Aorta (tissue), 5 donors: ENCODE measurements at regions of chr3 and their contacts with region 1.

Region 1: DNA sequence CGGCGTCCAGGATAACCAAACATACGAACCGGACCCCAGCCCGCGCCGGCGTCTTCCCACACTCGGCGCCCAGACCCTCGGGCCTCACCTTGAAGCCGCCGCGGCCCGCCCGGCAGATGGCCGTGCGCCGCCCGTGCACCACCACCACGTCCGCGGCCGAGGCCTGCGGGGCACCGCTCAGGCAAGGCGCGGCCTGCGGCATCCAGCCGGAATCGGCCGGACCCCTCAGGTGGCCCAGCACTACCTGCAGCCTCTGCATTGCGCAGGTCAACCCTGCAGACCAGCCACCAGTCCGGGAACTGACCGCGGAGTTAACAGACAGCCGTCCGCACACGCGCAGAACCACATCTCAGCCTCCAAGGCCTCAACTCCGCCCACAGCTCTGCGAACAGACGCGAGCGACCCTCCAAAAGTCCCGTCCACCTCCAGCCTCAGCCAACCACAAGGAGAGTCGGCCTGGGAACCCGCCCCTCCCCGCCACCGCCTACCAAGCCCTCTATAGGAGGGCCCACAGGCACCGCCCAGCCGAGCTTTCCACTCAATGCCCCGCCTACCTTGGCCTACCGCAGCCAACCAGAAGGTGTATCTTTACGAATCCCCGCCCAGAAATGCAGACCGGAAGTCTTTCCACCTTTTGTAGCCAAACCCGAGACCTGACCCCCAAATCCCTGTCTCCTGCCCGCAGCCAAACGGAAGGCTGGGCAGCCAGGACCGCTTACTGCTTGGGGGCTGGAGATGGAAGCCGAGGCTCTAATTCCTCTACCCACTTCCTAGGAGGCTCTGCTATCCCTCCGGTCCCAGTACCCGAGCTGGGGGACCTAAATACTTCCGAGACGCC is at the start of gene ACAA1:
- DNase-seq: peak; percentile 100
- ATAC-seq: peak; percentile 98
- H3K4me3 ChIP-seq: peak within 1 kb of the TSS; percentile 54 to 58
- H3K27ac ChIP-seq: peak within 1 kb of the TSS; percentile 29 to 98
- H3K4me1 ChIP-seq: no peaks in the 10 kb centered on the region
- H3K27me3 ChIP-seq: no peaks in the 10 kb centered on the region
- total RNA-seq, gene ACAA1: 39.3 to 54.8 TPM

Region 2: DNA sequence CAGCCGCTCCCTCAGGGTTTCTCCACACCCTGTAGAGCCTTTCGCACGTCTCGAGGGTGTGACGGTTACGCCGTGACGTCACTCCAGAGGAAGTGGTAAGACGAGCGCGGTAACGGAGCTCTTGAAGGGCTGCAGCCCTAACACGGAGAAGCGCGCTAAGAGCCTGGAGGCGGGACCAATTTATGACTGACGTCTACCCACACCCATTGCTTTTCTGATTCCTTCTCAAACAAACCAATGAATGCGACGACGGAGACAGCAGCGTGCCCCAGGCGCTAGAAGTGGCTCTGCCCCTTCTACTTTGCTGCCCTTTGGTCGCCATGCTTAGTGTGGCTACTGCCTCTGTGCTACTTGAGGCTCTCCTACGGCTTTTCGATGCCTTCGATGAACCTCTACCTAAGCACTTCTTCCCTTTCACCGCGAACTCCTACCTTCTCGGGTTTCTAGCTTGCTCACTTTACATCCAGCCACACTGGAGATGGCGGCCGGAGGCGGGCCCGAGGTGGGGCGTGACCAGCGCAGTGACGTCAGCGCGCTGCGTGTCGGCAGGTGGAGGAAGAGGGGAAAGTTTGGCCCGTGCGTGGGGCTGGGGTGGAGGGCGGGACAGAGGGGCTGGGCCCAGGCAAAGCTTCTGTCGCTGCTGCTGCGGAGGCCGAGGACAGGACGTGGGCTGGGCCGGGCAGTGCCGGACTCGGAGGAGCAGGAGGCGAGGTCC is 28.1 kb after region 1 on chr3 and contains the start of gene OXSR1:
- intact Hi-C with region 1: loop called (anchors 1 to 2 kb)
- DNase-seq: peak; percentile 99
- ATAC-seq: peak; percentile 98
- H3K4me3 ChIP-seq: peak within 1 kb of the TSS; percentile 75 to 79
- H3K27ac ChIP-seq: peak within 1 kb of the TSS; percentile 4 to 54
- H3K4me1 ChIP-seq: peaks cover 2% of the 10 kb centered on the region in 2 donors
- H3K27me3 ChIP-seq: no peaks in the 10 kb centered on the region
- total RNA-seq, gene OXSR1: 38.9 to 42.0 TPM

Region 3: DNA sequence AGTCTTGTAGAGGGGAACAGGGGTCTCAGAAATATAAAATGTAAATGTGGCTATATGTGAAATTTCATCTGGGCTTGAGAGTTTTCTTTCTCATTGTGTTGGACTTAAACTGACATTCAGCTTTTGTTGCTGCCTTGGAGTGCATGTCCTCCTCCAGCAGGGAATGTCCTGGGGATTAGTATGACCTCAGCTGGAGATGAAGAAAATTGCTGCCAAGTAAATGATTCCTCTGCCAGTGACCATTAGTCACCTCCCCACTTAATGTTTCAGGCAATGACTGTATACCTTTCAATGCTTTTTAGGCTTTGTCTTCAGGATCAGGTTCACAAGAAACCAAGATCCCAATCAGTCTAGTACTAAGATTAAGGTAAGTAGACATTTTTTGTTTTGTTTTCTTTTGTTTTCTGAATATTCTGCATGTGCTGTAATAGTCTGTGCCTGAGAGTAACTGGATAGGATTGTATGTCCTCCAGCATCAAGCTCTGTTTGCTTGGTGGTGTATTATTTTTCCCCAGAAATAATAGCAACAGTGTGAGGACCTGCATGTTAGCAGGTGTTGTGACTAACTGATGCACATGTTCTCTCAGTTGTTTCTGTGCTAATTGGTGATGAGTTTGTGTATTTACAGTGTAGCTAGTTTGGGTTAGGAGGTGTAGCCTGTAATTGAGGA is 110.5 kb after region 1 on chr3:
- intact Hi-C with region 1: loop called in 1 of 2 experiments (anchors 5 kb)
- DNase-seq: no peak
- ATAC-seq: peak; percentile 86
- H3K4me3 ChIP-seq: no peak overlapping the region
- H3K27ac ChIP-seq: no peak overlapping the region
- H3K4me1 ChIP-seq: peaks cover 2 to 3% of the 10 kb centered on the region in 2 donors
- H3K27me3 ChIP-seq: no peaks in the 10 kb centered on the region

Region 4: GRCh38 chr3:38374221-38374620 is 237.2 kb after region 1 on chr3:
- intact Hi-C with region 1: no loop called
- DNase-seq: no peak
- ATAC-seq: no peak
- H3K4me3 ChIP-seq: no peak overlapping the region
- H3K27ac ChIP-seq: no peak overlapping the region
- H3K4me1 ChIP-seq: no peaks in the 10 kb centered on the region
- H3K27me3 ChIP-seq: no peaks in the 10 kb centered on the region

Region 5: DNA sequence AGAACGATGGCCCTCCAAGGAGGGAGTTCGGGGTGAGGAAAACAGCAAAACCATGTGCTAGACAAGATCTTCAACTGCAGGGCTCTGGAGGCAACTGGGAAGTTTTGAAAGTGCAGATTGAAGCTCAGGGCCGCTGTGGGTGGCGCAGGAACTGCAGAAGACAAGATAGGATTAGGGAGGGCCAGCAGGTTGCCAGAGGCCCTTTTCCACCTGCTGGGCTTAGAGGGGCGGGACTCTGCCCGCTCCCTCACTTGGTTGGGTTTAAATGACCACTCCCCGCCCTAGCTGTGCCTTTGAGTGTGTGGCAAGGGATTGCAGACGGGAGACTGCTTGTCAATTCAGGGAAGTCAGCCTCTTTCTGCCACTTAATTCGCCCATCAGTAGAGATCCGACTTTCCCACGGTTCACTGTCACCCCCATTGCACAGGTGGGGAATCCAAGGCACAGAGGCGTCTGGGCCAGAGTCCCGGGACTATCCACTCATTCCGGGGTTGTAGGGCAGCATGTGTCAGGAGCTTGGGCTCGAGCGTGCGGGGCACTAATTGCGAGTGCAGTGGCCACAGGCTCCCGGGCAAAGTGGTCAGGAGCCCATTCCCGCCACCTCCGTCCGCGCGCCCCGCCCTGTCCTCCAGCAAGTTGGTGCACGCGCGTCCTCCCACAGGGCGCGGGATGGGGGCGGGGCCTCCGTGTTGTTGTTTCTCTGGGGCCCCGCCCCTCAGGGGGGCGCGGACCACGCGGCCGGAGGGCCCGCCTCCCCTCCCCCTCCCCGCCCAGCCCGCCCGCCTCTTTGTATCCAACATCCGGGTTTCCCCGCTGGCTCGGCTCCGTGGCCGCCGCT is 316.3 kb after region 1 on chr3 and contains the start of gene ACVR2B:
- intact Hi-C with region 1: loop called in 1 of 2 experiments (anchors 5 kb)
- DNase-seq: peak; percentile 92 to 94
- ATAC-seq: peak; percentile 89
- H3K4me3 ChIP-seq: peak within 1 kb of the TSS; percentile 70 to 86
- H3K27ac ChIP-seq: peak within 1 kb of the TSS in 1 of 2 donors; percentile 16
- H3K4me1 ChIP-seq: no peaks in the 10 kb centered on the region
- H3K27me3 ChIP-seq: no peaks in the 10 kb centered on the region
- total RNA-seq, gene ACVR2B: 4.0 to 8.2 TPM